ENCODE measurements at regions of chr16 and their contacts with region 1.

Region 1: DNA sequence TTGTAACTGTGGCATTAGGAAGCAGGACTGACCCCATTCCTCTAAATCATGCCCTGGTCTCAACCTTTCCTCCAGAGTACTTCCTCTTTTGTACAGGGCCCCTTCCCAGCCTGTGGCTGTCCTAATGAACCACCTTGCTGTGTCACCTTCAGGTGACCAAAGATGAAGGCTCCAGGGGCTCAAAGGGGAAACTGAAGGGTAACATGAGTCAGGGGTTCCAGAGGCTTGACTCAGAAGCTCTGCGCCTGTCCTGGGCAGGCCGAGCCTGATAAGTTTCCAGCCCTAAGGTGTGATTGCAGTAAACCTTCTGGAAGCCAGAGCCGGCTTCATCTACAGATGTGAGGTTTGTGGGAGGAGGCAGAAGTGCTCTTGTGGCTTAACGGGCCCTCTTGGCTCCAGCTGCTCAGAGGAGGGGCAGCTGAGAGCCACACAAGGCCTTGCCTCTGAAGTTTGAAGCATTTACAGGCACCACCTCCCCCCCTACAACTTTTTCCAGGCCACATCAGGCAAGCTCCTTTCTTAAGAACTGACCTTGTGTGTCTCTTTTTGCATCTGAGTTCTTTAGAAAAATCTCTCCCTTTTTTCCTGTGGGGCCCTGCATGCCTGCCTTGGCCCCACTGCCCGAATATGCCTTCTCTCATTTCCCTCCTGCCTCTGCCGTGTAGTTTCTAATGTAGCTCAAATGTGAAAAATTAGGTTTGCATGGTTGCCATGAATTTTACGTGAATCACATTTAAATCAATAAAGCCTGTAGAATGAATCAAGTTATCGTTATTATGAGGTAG is 149.9 kb downstream of the CLEC16A start:
- DNase-seq: peak; percentile 88
- ATAC-seq: peak; percentile 74
- H3K4me3 Mint-ChIP-seq: peak overlapping the region; percentile 46
- H3K27ac Mint-ChIP-seq: peak overlapping the region; percentile 97
- H3K4me1 Mint-ChIP-seq: peaks cover 67% of the 10 kb centered on the region
- H3K27me3 Mint-ChIP-seq: no peaks in the 10 kb centered on the region
- CTCF ChIP-seq: no peak

Region 2: DNA sequence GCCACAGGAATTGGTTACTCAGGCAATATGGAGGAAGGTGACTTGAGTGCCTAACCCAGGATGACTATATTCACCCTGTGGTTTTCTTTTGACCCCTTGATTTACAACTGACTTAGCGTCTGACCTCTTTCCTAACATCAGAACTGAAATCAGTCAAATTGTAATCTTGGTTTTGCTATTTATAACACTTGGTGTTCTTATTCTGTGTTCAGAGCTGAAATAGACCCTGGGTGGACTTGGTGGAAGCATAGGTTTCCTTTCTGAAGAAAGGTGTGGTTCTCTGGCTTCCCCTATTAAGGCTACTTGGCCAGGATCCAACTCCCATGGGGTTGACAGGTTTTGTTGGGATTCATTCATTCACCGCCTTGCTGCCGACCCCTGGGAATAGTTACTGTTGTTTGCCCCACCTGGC is 69.1 kb before region 1 on chr16:
- CTCF ChIA-PET with region 1: no interaction called
- POLR2A ChIA-PET with region 1: no interaction called
- intact Hi-C with region 1: no loop called
- DNase-seq: no peak
- ATAC-seq: peak; percentile 83
- H3K4me3 Mint-ChIP-seq: no peak overlapping the region
- H3K27ac Mint-ChIP-seq: peak overlapping the region; percentile 59
- H3K4me1 Mint-ChIP-seq: peaks cover 12% of the 10 kb centered on the region
- H3K27me3 Mint-ChIP-seq: no peaks in the 10 kb centered on the region
- CTCF ChIP-seq: no peak

Region 3: DNA sequence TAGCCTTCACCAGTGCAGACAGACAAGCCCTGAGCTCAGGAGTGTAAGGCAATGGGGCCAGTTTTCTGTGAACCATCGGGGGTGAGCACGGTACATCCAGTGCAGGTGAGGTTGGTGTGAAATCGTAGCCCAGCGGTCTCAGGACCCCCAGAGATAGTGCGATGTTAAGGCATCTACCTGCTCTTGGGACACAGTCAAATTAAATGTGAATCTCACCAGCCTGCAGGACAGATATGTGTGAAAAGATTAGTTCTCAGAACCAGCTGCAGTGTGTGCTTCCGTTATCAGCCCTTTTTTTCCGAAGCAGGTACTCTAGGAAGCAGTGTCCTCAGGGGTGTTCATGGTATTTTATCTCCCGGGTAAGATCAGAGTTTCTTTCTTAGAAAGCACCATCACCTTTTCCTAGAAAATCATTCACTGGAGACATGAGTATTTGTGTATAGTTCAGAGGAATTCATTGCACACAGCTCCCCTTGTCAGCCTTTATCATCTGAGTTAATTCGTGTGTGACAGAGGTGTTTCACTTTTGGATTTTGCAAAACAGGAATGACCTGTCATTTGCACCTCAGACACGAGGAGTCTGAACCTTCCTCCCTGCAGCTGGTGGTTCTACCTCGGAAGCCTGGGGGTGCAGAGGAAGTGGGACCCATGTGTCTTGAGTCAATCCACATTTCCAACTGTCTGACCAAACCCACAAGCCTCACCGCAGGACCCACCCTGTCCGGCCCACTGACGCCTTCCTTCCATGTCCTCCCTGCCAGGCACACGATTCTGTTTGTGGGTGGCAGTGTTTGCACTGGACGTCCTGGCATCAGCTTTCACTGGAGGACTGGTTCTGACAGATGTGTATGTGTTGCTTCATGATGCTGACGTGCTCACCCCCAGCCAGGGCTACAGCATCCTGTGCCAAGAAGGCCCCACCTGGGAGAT is 42.1 kb before region 1 on chr16:
- CTCF ChIA-PET with region 1: interaction called, 10 read pairs
- POLR2A ChIA-PET with region 1: interaction called, 19 read pairs
- intact Hi-C with region 1: loop called (anchors 5 kb)
- DNase-seq: peak; percentile 93
- ATAC-seq: peak; percentile 86
- H3K4me3 Mint-ChIP-seq: peak overlapping the region; percentile 8
- H3K27ac Mint-ChIP-seq: peak overlapping the region; percentile 97
- H3K4me1 Mint-ChIP-seq: peaks cover 69% of the 10 kb centered on the region
- H3K27me3 Mint-ChIP-seq: no peaks in the 10 kb centered on the region
- CTCF ChIP-seq: no peak

Region 4: DNA sequence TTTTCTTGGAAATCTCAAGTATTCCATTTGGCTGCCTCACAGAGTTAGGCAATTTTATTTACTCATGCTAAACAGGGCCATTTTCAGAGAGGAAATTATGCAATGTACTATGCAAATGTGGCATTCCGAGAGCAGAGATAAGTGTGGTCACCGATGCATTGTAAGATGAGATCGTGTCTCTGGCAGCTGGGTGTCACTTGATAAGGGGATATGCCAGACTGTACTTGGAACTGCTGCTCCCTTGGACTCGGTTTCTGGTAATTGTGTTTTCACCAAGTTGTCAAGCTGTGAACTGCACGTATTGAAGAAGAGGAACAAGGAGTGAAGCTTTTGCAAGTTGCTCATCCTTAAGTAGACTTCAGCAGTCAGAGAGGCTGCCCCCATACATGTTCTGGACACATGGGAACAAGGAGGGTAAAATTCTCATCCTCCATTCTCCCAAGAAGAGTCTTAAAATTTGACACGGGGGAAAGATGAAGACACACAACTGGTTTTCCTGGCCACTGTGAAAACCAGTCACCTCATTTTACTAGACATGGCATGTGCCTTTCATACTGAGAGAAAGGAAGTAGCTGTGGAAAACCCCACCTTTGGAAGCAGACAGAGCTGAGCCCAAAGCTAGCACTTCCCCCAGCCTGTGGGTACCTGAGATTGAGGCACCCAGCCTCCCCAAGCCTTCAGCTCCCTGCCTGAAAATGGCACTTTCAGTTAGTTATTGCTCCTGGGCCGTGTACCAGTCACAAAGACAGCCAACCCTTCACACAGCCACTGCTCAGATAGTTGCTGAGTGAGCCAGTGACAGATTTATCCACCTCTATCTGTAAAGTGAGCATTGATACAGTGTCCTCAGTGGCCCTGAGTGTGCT is 11.0 kb after region 1 on chr16:
- CTCF ChIA-PET with region 1: interaction called, 6 read pairs
- POLR2A ChIA-PET with region 1: interaction called, 17 read pairs
- intact Hi-C with region 1: no loop called
- DNase-seq: peak; percentile 61
- ATAC-seq: peak; percentile 66
- H3K4me3 Mint-ChIP-seq: peak overlapping the region; percentile 11
- H3K27ac Mint-ChIP-seq: peak overlapping the region; percentile 89
- H3K4me1 Mint-ChIP-seq: peaks cover 61% of the 10 kb centered on the region
- H3K27me3 Mint-ChIP-seq: no peaks in the 10 kb centered on the region
- CTCF ChIP-seq: no peak

Region 5: DNA sequence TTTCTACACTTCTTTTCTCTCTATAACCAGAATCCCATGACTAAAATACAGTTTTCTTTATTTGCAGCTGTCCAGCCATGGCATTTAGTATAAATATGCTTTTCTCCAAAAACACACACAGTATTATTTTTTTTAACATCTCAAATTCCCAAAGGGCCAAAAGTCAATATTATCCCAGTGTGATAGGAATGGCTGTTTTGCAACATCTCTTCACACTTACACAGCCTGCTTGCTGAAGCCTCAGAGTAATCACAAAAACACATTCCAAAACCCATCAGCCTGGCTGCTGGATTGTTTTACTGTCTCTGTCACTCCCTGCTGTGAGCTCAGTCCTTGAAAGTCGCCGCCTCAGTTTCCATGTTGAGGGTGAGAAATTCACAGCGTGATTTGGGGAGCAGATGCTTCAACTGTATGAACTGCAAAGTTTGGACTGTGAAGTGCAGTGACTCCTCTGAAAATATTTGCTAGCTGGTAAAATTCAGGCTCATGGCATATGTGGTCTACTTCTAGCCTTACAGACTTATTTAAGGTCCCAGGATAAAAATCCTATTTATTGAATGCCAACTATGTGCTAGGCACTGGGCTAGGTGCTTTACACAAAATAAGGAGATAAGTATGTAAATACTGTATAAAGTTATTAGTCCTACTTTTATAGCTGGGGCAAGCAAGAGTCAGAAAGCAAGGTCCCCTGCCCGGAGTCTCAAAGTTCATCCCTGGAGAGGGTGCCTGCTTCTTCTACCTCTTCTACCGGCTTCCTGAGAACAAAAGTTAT is 45.2 kb after region 1 on chr16:
- CTCF ChIA-PET with region 1: interaction called, 5 read pairs
- POLR2A ChIA-PET with region 1: interaction called, 12 read pairs
- intact Hi-C with region 1: no loop called
- DNase-seq: no peak
- ATAC-seq: no peak
- H3K4me3 Mint-ChIP-seq: peak overlapping the region; percentile 20
- H3K27ac Mint-ChIP-seq: peak overlapping the region; percentile 88
- H3K4me1 Mint-ChIP-seq: peaks cover 47% of the 10 kb centered on the region
- H3K27me3 Mint-ChIP-seq: no peaks in the 10 kb centered on the region
- CTCF ChIP-seq: no peak

Region 6: DNA sequence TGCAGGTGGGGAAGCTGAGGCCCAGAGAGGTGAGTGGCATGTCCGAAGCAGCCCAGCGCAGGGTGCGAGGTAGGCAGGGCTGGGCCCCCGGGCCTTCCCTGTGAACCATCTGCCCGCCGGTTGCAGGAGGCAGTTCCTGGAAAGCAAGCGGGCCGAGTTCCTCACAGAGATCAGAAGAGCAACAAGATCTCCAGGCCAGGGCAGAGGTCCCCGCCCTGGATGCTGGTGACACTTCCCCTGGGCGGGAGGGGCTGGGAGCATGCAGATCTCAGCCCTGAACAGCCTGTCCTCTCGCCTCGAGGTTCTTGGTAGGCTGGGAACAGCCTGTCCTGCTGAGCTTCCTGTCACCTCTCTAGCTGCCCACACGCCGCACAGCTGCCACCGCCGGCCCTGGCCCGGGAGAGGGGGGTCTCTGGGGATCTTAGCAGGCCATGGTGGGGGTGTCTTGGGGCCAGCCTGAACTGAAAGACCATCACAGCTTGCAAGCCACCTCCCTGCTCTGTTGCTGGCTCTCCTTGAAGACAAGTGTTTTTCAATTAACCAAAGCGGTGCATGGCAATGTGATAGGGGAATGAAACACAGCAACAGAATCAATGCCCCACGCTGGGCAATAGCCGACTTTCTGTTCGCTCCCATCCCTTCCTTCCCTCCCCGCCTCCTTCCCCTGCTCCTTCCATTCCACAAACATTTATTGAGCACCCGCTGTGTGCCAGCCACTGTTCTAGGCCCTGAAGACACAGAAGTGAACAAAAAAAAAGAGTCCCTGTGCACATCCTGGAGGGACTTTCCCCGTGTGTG is 130.0 kb after region 1 on chr16:
- CTCF ChIA-PET with region 1: interaction called, 6 read pairs
- POLR2A ChIA-PET with region 1: interaction called, 20 read pairs
- intact Hi-C with region 1: no loop called
- DNase-seq: peak; percentile 91
- ATAC-seq: peak; percentile 65
- H3K4me3 Mint-ChIP-seq: peak overlapping the region; percentile 63
- H3K27ac Mint-ChIP-seq: peak overlapping the region; percentile 98
- H3K4me1 Mint-ChIP-seq: peaks cover 55% of the 10 kb centered on the region
- H3K27me3 Mint-ChIP-seq: no peaks in the 10 kb centered on the region
- CTCF ChIP-seq: no peak